G401 (cell line): ENCODE measurements at regions of chr1 and their contacts with region 1.

Region 1: DNA sequence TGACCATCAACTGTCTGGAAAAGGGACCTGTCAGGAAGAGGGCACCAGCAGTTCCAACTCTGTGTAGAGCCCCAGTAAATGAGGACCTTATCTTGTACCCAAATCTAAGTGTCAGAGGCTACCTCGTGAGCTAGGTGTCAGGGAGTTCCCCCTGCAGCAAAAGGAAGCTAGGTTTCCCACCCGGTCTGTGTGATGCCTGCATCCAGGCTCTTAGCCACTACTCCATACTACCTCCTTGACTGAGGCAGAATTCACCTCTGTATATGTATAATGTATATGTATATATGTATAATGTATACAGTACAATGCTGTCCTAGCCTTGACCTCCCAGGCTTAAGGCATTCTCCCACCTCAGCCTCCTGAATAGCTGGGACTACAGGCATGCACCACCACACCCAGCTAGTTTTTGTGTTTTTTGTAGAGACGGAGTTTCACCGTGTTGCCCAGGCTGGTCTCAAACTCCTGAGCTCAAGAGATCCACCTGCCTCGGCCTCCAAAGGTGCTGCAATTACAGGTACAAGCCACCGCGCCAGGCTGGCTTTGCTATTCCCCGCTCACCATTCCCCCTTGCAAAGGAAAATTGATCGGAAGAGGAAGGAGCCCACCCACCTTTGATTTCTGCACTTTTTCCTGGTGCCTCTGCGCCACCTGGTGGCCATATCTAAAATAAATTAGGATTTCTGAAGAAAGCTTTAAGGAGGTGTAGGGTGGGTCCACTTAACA is 15.7 kb upstream of the LUZP1 start:
- DNase-seq: peak; percentile 56

Region 2: GRCh38 chr1:22983934-22984333 is 200.4 kb before region 1 on chr1:
- in situ Hi-C with region 1: loop called (anchors 10 kb)
- DNase-seq: no peak

Region 3: GRCh38 chr1:23108918-23109533 is 75.3 kb before region 1 on chr1:
- in situ Hi-C with region 1: loop called (anchors 5 kb)
- DNase-seq: no peak